ENCODE measurements at regions of chr9 and their contacts with region 1.

Region 1: GRCh38 chr9:20426019-20426418 is 196.3 kb downstream of the MLLT3 start:
- DNase-seq: no peak
- H3K4me3 Mint-ChIP-seq: no peak overlapping the region
- H3K27ac Mint-ChIP-seq: no peak overlapping the region
- H3K4me1 Mint-ChIP-seq: no peaks in the 10 kb centered on the region
- H3K27me3 Mint-ChIP-seq: no peaks in the 10 kb centered on the region
- CTCF ChIP-seq: no peak

Region 2: DNA sequence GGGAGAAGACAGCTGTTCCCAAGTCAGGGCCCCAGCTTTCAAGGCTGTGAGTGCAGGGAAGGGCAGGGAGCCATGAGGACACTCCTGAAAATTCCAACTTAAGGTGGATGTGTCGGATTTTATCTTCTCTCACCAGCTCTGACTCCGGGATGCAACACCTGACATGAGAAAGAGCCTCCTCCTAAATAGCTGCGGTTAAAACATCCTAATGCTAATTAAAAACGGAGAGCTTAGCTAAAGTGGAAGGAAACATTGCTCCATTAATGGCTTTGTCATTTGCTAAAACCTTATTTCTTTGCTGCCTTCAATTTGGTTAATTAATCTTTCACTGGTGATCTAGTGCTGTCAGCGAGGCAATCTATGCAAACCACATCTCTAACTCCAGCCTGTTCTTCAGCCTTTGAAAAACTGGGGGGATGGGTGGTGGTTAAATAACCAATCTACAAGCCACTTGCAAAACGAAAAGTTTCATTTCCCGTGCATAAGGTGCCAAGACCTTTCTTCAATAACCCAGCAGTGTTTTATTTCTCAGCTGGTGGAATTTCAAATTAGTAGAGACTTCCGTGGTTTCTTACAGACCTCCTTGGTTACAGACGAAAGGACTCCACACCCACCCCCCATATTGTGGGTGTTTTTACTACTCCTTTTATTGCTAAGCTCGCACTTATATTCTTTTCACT is 183.4 kb before region 1 on chr9:
- CTCF ChIA-PET with region 1: no interaction called
- intact Hi-C with region 1: no loop called
- DNase-seq: no peak
- H3K4me3 Mint-ChIP-seq: no peak overlapping the region
- H3K27ac Mint-ChIP-seq: no peak overlapping the region
- H3K4me1 Mint-ChIP-seq: no peaks in the 10 kb centered on the region
- H3K27me3 Mint-ChIP-seq: peaks cover 38% of the 10 kb centered on the region
- CTCF ChIP-seq: no peak

Region 3: GRCh38 chr9:20369391-20369790 is 56.6 kb before region 1 on chr9:
- CTCF ChIA-PET with region 1: no interaction called
- intact Hi-C with region 1: no loop called
- DNase-seq: no peak
- H3K4me3 Mint-ChIP-seq: no peak overlapping the region
- H3K27ac Mint-ChIP-seq: no peak overlapping the region
- H3K4me1 Mint-ChIP-seq: no peaks in the 10 kb centered on the region
- H3K27me3 Mint-ChIP-seq: no peaks in the 10 kb centered on the region
- CTCF ChIP-seq: no peak

Region 4: DNA sequence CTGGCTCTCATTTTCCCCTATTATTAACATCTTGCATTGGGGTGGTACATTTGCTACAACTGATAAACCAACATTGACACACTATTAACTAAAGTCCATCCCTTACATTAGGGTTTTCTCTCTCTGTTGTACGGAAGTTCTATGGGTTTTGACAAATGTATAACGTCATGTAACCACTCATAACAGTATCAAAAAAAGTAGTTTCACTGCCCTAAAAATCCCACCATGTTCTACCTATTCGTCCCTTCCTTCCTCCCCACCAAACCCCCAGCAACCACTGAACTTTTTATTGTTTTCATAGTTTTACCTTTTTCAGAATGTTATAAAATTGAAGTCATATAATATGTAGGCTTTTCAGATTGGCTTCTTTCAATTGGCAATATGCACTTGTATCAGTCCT is 156.1 kb after region 1 on chr9:
- CTCF ChIA-PET with region 1: no interaction called
- intact Hi-C with region 1: no loop called
- DNase-seq: no peak
- H3K4me3 Mint-ChIP-seq: no peak overlapping the region
- H3K27ac Mint-ChIP-seq: no peak overlapping the region
- H3K4me1 Mint-ChIP-seq: peaks cover 33% of the 10 kb centered on the region
- H3K27me3 Mint-ChIP-seq: no peaks in the 10 kb centered on the region
- CTCF ChIP-seq: no peak

Region 5: DNA sequence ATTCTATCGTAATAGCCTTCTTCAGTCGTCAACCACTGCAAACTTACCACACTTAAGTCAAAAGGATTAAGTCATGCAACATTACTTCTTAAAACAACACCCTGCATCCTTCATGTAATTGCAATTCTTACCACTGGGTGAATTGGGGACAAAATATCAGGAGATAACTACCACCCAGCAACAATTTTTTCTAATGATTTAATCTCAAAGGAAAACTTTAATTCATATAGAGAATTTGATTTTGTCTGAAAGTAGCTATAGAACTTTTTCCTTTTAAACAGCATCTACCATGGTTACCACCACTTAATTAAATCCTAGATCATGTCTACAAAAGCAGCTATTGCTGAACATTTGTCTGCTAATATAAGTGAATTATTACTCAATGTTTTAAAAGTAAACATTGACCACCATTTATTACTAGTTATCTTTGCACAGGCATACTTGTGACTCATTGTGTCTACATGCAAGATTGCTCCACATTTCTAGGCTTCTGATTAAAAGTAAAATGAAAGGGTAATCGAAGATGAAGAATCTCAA is 185.8 kb after region 1 on chr9:
- CTCF ChIA-PET with region 1: no interaction called
- intact Hi-C with region 1: no loop called
- DNase-seq: no peak
- H3K4me3 Mint-ChIP-seq: peak overlapping the region; percentile 59
- H3K27ac Mint-ChIP-seq: peak overlapping the region; percentile 89
- H3K4me1 Mint-ChIP-seq: peaks cover 43% of the 10 kb centered on the region
- H3K27me3 Mint-ChIP-seq: no peaks in the 10 kb centered on the region
- CTCF ChIP-seq: peak; percentile 33

Region 6: GRCh38 chr9:20941174-20941690 is 515.2 kb after region 1 on chr9:
- CTCF ChIA-PET with region 1: no interaction called
- intact Hi-C with region 1: loop called (anchors 5 kb)
- DNase-seq: peak; percentile 39
- H3K4me3 Mint-ChIP-seq: no peak overlapping the region
- H3K27ac Mint-ChIP-seq: no peak overlapping the region
- H3K4me1 Mint-ChIP-seq: no peaks in the 10 kb centered on the region
- H3K27me3 Mint-ChIP-seq: no peaks in the 10 kb centered on the region
- CTCF ChIP-seq: peak; percentile 47